Vagina (tissue), 2 donors: ENCODE measurements at regions of chr19 and their contacts with region 1.

Region 1: GRCh38 chr19:43908659-43909058 is 26.4 kb downstream of the ZNF45 start:
- DNase-seq: no peak
- H3K4me3 ChIP-seq: no peak overlapping the region
- H3K27ac ChIP-seq: no peak overlapping the region
- H3K4me1 ChIP-seq: no peaks in the 10 kb centered on the region
- H3K27me3 ChIP-seq: no peaks in the 10 kb centered on the region
- CTCF ChIP-seq: no peak
- POLR2A ChIP-seq: no peak

Region 2: GRCh38 chr19:43784981-43785808 is 123.5 kb before region 1 on chr19:
- intact Hi-C with region 1: no loop called
- DNase-seq: no peak
- H3K4me3 ChIP-seq: no peak overlapping the region
- H3K27ac ChIP-seq: peak overlapping the region; percentile 73
- H3K4me1 ChIP-seq: peaks cover 32% of the 10 kb centered on the region
- H3K27me3 ChIP-seq: no peaks in the 10 kb centered on the region
- CTCF ChIP-seq: peak; percentile 86 to 90 (median 87)
- POLR2A ChIP-seq: no peak

Region 3: GRCh38 chr19:43966079-43966694 is 57.5 kb after region 1 on chr19:
- intact Hi-C with region 1: loop called (anchors 2 kb)
- DNase-seq: no peak
- H3K4me3 ChIP-seq: no peak overlapping the region
- H3K27ac ChIP-seq: no peak overlapping the region
- H3K4me1 ChIP-seq: no peaks in the 10 kb centered on the region
- H3K27me3 ChIP-seq: no peaks in the 10 kb centered on the region
- CTCF ChIP-seq: no peak
- POLR2A ChIP-seq: no peak